Activated CD4-positive, alpha-beta memory T cell treated with anti-CD3 and anti-CD28 coated beads for 36 hours (primary cell): ENCODE measurements at regions of chr1 and their contacts with region 1.

Region 1: GRCh38 chr1:199226163-199226562 is 587.3 kb downstream of the PTPRC start:
- DNase-seq: peak; percentile 47
- H3K4me3 Mint-ChIP-seq: peak overlapping the region; percentile 35
- H3K27ac Mint-ChIP-seq: peak overlapping the region; percentile 55
- H3K4me1 Mint-ChIP-seq: peaks cover 20% of the 10 kb centered on the region
- H3K27me3 Mint-ChIP-seq: no peaks in the 10 kb centered on the region

Region 2: DNA sequence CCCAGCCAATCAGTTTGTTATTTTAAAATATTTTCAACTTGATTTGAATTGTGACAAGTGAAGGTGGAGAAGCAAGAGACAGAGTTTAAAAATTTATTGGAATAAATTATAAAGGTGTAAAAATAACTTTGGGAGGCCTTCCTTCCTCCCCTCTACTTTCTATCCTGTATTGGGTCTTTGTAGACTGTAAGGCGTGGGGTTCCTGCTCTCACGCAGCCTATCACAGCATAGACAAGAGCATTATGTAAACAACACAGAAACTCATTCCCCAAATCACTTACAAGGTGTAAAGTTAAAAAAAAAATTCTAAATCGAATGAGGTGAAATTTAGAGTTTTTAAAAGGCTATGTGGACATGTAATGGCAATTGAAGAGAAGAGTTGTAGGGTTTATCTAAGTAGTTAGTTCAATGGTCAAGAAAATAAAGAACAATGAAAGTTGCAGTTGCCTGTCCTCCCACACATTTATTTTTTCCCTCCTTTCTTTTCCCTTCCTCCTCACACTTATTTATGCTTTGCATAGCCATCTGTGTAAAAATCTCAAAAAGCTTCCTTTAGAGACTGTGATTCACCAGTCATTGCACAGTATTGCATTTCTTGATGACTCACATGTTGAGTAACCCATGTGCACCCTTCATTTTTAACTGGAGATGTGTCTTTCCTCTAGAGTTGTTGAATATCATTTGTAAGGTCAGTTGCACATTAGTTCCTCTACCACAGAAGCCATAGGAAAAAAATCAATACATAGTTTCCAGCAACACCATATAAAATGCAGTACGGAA is 345.2 kb before region 1 on chr1:
- CTCF ChIA-PET with region 1: no interaction called
- POLR2A ChIA-PET with region 1: no interaction called
- intact Hi-C with region 1: loop called (anchors 2 kb)
- DNase-seq: no peak
- H3K4me3 Mint-ChIP-seq: no peak overlapping the region
- H3K27ac Mint-ChIP-seq: peak overlapping the region; percentile 26
- H3K4me1 Mint-ChIP-seq: peaks cover 13% of the 10 kb centered on the region
- H3K27me3 Mint-ChIP-seq: no peaks in the 10 kb centered on the region

Region 3: GRCh38 chr1:199089393-199090122 is 136.6 kb before region 1 on chr1:
- CTCF ChIA-PET with region 1: no interaction called
- POLR2A ChIA-PET with region 1: no interaction called
- intact Hi-C with region 1: loop called (anchors 1 kb)
- DNase-seq: peak; percentile 41
- H3K4me3 Mint-ChIP-seq: no peak overlapping the region
- H3K27ac Mint-ChIP-seq: no peak overlapping the region
- H3K4me1 Mint-ChIP-seq: peaks cover 14% of the 10 kb centered on the region
- H3K27me3 Mint-ChIP-seq: no peaks in the 10 kb centered on the region

Region 4: GRCh38 chr1:199173356-199173755 is 52.8 kb before region 1 on chr1:
- CTCF ChIA-PET with region 1: no interaction called
- POLR2A ChIA-PET with region 1: no interaction called
- intact Hi-C with region 1: loop called (anchors 1 kb)
- DNase-seq: no peak
- H3K4me3 Mint-ChIP-seq: no peak overlapping the region
- H3K27ac Mint-ChIP-seq: no peak overlapping the region
- H3K4me1 Mint-ChIP-seq: peaks cover 49% of the 10 kb centered on the region
- H3K27me3 Mint-ChIP-seq: no peaks in the 10 kb centered on the region

Region 5: DNA sequence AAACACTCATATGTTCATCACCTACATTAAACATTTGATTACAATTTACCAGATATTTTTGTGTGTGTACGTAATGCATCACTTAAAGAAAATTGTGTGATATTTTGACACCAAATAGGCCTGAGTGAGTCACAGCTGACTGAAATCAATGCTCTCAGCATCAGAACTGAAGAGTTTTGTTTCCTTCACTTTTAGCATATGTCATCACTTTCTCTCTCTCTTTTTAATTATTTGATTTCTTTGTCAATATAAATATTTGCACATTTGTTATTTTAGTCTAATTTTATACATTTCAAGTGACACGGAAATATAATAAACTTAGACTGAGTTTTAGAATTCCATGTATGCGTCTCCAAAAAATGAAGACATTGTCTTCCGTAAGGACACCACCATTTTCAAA is 42.0 kb before region 1 on chr1:
- CTCF ChIA-PET with region 1: no interaction called
- POLR2A ChIA-PET with region 1: no interaction called
- intact Hi-C with region 1: no loop called
- DNase-seq: no peak
- H3K4me3 Mint-ChIP-seq: no peak overlapping the region
- H3K27ac Mint-ChIP-seq: no peak overlapping the region
- H3K4me1 Mint-ChIP-seq: peaks cover 2% of the 10 kb centered on the region
- H3K27me3 Mint-ChIP-seq: no peaks in the 10 kb centered on the region

Region 6: DNA sequence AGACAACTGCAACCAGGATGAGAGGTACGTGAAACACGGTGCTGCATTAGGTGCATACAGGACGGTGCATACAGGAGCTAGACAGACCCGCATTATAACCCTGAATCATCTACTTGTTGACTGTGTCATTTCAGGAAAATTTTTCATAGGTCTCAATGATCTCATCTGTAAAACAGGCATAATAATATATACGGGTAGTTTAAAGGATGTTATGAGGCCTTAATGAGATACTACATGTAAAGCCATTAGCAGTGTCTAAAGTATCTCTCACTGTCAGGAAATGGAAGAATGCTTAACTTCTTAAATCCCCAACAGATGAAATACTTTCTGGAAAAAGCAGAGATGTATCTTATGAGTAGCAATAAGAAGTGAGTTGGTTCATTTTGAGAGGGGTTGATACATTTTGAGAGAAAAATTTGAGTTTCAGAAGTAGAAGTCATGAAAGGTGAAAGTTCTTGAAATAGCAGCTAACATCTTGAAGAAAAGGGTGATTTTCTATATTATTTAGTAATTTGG is 82.2 kb after region 1 on chr1:
- CTCF ChIA-PET with region 1: no interaction called
- POLR2A ChIA-PET with region 1: no interaction called
- intact Hi-C with region 1: loop called (anchors 1 kb)
- DNase-seq: no peak
- H3K4me3 Mint-ChIP-seq: no peak overlapping the region
- H3K27ac Mint-ChIP-seq: no peak overlapping the region
- H3K4me1 Mint-ChIP-seq: peaks cover 13% of the 10 kb centered on the region
- H3K27me3 Mint-ChIP-seq: peaks cover 41% of the 10 kb centered on the region

Region 7: GRCh38 chr1:199353906-199354305 is 127.7 kb after region 1 on chr1:
- CTCF ChIA-PET with region 1: no interaction called
- POLR2A ChIA-PET with region 1: no interaction called
- intact Hi-C with region 1: no loop called
- DNase-seq: no peak
- H3K4me3 Mint-ChIP-seq: no peak overlapping the region
- H3K27ac Mint-ChIP-seq: no peak overlapping the region
- H3K4me1 Mint-ChIP-seq: no peaks in the 10 kb centered on the region
- H3K27me3 Mint-ChIP-seq: peaks cover 8% of the 10 kb centered on the region